CD8-positive, alpha-beta T cell (primary cell): ENCODE measurements at regions of chr1 and their contacts with region 1.

Region 1: DNA sequence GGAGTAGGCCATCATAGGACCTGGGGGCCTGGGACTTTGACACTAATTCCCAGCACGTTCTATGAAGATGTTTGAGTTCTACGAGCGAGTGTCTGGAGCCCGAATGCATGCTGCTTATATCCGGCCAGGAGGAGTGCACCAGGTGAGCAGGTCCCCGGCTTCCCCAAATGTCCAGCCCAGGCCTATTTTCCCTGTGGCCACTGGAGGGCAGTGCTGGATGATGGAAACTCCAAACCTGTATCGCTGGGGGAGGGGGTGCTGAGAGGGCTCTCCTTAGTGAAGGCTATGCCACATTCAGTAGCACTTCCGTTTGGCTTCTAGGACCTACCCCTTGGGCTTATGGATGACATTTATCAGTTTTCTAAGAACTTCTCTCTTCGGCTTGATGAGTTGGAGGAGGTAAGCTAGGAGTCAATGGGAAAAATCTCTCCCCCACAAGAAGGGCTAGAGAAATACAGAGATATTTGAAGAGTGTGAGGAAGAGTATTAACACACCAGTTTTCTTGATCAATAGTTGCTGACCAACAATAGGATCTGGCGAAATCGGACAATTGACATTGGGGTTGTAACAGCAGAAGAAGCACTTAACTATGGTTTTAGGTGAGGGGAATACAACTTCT is 5.2 kb upstream of the FCER1G start:
- DNase-seq: peak; percentile 48 to 85 (median 74)
- ATAC-seq: peak; percentile 99
- H3K4me3 ChIP-seq: no peak overlapping the region
- H3K4me3 Mint-ChIP-seq: no peak overlapping the region
- H3K27ac ChIP-seq: peak overlapping the region in 1 of 2 experiments; percentile 11
- H3K27ac Mint-ChIP-seq: peak overlapping the region; percentile 50
- H3K4me1 ChIP-seq: peaks cover 20% of the 10 kb centered on the region
- H3K4me1 Mint-ChIP-seq: peaks cover 37% of the 10 kb centered on the region
- H3K27me3 ChIP-seq: no peaks in the 10 kb centered on the region
- H3K27me3 Mint-ChIP-seq: no peaks in the 10 kb centered on the region
- CTCF ChIP-seq: peak; percentile 60

Region 2: DNA sequence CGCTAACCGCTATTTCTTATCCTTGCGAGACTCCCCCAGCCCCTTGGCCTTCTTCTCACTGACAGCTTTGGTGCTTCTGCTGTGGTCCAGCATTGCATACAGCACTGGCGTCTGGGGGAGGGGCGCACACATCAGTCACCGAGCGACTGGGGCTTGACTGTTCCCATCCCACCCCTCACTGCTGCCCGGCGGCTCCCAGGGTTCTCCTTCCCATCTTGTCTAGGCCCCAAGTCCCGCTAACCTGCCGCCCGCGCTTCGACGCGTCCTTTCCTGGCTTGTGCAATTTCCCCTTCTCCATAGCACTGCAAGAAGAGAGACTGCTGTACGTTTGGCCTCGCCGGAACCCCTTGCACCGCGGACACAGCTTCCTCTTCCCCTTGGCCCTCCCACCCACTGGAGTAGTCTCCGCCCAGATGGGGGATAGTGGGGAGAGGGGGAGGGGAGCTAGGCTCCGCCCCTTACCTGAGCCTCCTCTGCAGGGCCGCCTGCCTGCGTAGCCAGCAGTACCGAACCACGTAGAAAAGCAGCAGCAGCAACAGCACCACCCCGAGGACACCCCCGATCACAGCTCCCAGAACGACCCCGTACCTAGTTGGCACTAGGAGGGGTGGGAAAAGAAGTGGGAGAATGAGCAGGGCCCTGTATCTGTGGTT is 96.1 kb after region 1 on chr1:
- CTCF ChIA-PET with region 1: interaction called, 10 read pairs
- POLR2A ChIA-PET with region 1: interaction called, 3 read pairs
- intact Hi-C with region 1: no loop called
- DNase-seq: peak; percentile 73 to 95 (median 89)
- ATAC-seq: peak; percentile 98
- H3K4me3 ChIP-seq: peak overlapping the region; percentile 74 to 93
- H3K4me3 Mint-ChIP-seq: peak overlapping the region; percentile 97
- H3K27ac ChIP-seq: peak overlapping the region; percentile 70 to 71
- H3K27ac Mint-ChIP-seq: peak overlapping the region; percentile 93
- H3K4me1 ChIP-seq: peaks cover 31% of the 10 kb centered on the region
- H3K4me1 Mint-ChIP-seq: peaks cover 40% of the 10 kb centered on the region
- H3K27me3 ChIP-seq: no peaks in the 10 kb centered on the region
- H3K27me3 Mint-ChIP-seq: no peaks in the 10 kb centered on the region
- CTCF ChIP-seq: peak; percentile 54

Region 3: GRCh38 chr1:161531986-161532643 is 322.2 kb after region 1 on chr1:
- CTCF ChIA-PET with region 1: no interaction called
- POLR2A ChIA-PET with region 1: no interaction called
- intact Hi-C with region 1: loop called in 1 of 2 experiments (anchors 5 kb)
- DNase-seq: no peak
- ATAC-seq: no peak
- H3K4me3 ChIP-seq: no peak overlapping the region
- H3K4me3 Mint-ChIP-seq: no peak overlapping the region
- H3K27ac ChIP-seq: no peak overlapping the region
- H3K27ac Mint-ChIP-seq: peak overlapping the region; percentile 22
- H3K4me1 ChIP-seq: peaks cover 7% of the 10 kb centered on the region
- H3K4me1 Mint-ChIP-seq: peaks cover 11% of the 10 kb centered on the region
- H3K27me3 ChIP-seq: no peaks in the 10 kb centered on the region
- H3K27me3 Mint-ChIP-seq: no peaks in the 10 kb centered on the region
- CTCF ChIP-seq: no peak